ENCODE measurements at regions of chr1 and their contacts with region 1.

Region 1: DNA sequence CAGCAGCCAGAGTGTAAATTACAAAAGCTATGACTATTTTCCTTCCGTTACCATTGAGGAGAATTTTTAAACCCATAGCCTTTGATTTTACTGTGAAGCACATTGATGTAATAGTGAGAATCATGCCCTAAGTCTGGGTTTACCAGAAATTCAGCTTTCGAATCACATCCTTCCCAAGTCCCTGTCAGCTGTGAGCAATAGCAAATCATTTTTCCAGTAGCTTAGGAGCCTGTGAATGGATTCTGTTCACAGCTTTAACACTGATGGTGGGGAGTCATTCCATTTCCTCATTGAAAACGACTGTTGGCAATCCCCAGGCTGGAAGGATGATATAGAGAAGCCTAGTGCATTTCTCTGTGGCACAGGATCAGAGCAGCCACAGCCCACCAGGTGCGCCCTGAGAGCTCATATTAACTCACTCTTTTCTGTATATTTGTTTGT is 82.2 kb upstream of the C1orf105 start:
- DNase-seq: peak; percentile 51
- ATAC-seq: peak; percentile 78
- H3K4me3 Mint-ChIP-seq: no peak overlapping the region
- H3K27ac Mint-ChIP-seq: peak overlapping the region; percentile 65
- H3K4me1 Mint-ChIP-seq: peaks cover 44% of the 10 kb centered on the region
- H3K27me3 Mint-ChIP-seq: no peaks in the 10 kb centered on the region

Region 2: DNA sequence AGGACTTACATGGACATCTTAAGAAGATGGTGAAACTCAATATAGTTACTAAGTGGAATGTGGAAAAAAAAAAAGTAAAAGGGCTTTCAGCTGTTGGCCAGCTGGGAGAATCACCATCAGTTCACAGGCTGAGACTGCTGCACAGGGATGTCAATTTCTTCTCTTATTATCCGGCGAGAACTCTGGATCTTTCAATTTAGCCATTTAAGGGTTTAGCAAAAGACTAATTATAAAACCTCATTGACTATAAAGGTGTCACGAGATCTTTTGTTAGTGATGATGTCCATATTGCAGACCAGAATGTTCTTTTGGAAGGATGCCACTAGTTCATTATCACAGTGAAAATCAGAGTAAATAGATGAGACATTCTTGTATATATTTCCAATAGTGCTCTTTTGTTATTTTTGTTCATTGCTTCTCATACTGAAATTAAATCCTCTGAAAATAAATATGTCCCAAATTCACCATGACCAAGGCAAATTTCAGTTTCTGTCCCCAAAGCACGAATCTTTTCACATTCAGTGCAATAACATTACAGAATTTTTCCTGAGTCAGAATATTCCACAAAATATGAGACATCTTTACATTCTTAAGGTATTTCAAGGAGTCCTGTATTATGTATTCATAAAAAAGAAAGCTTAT is 230.9 kb before region 1 on chr1:
- CTCF ChIA-PET with region 1: no interaction called
- DNase-seq: no peak
- ATAC-seq: no peak
- H3K4me3 Mint-ChIP-seq: no peak overlapping the region
- H3K27ac Mint-ChIP-seq: no peak overlapping the region
- H3K4me1 Mint-ChIP-seq: no peaks in the 10 kb centered on the region
- H3K27me3 Mint-ChIP-seq: peaks cover 3% of the 10 kb centered on the region

Region 3: DNA sequence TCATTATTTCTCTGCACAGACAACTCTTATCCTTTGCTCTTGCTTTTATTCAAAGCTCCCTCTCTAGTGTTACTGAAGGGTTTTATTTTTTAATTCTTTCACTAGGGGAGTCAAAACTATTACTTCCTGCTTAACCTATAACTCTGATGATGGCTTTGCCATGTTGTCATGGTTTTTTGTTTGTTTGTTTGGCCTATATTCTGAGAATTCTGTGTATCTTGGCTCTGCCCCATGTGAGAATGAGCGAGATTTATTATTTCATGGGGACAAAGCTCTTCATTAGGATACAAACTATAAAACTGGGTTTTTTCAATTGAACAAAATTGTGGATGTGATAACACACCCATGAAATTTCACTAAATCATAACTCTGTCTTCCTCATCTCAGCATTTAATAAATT is 108.4 kb before region 1 on chr1:
- CTCF ChIA-PET with region 1: no interaction called
- DNase-seq: no peak
- ATAC-seq: no peak
- H3K4me3 Mint-ChIP-seq: no peak overlapping the region
- H3K27ac Mint-ChIP-seq: no peak overlapping the region
- H3K4me1 Mint-ChIP-seq: peaks cover 12% of the 10 kb centered on the region
- H3K27me3 Mint-ChIP-seq: no peaks in the 10 kb centered on the region

Region 4: GRCh38 chr1:172357753-172358385 is 19.6 kb after region 1 on chr1:
- CTCF ChIA-PET with region 1: interaction called, 18 read pairs
- DNase-seq: no peak
- ATAC-seq: peak; percentile 2
- H3K4me3 Mint-ChIP-seq: peak overlapping the region; percentile 50
- H3K27ac Mint-ChIP-seq: peak overlapping the region; percentile 88
- H3K4me1 Mint-ChIP-seq: peaks cover 48% of the 10 kb centered on the region
- H3K27me3 Mint-ChIP-seq: no peaks in the 10 kb centered on the region

Region 5: DNA sequence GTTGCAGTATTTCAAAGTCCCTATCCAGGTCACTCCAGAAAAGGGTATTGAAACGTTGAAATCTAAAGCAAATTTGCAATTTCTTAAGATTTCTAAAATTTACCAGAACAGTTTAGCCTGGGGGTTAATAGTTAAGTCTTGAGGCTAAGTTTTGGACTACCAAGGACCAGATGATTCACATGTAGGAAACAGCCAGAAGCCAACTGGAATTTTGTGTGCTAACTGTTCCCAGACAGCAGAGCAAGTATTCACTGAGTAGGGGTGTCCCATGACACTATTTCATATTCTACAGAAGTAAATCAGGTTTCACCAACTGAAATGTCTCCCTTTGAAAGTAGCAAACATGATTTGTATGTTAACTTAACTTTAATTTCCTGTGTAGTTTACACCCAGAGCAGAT is 70.6 kb after region 1 on chr1:
- CTCF ChIA-PET with region 1: no interaction called
- DNase-seq: no peak
- ATAC-seq: no peak
- H3K4me3 Mint-ChIP-seq: no peak overlapping the region
- H3K27ac Mint-ChIP-seq: no peak overlapping the region
- H3K4me1 Mint-ChIP-seq: peaks cover 3% of the 10 kb centered on the region
- H3K27me3 Mint-ChIP-seq: no peaks in the 10 kb centered on the region

Region 6: DNA sequence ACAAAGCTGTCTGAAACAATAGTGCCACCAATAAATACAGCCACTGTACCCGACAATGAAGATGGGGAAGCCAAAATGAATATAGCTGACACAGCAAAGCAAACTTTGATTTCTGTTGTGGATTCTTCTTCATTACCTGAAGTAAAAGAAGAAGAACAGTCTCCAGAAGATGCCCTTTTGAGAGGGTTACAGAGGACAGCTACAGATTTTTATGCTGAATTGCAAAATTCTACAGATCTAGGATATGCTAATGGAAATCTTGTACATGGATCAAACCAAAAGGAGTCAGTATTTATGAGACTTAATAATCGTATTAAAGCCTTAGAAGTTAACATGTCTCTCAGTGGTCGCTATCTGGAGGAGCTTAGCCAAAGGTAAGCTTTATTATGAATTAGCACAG is 251.2 kb after region 1 on chr1:
- CTCF ChIA-PET with region 1: no interaction called
- DNase-seq: no peak
- ATAC-seq: no peak
- H3K4me3 Mint-ChIP-seq: no peak overlapping the region
- H3K27ac Mint-ChIP-seq: peak overlapping the region; percentile 79
- H3K4me1 Mint-ChIP-seq: peaks cover 29% of the 10 kb centered on the region
- H3K27me3 Mint-ChIP-seq: no peaks in the 10 kb centered on the region

Measured in activated CD8-positive, alpha-beta memory T cell treated with anti-CD3 and anti-CD28 coated beads, Interleukin-2, amount 10 ng/mL, durations not matched to agents 7 days and 5 days (primary cell).